ENCODE measurements at regions of chr12 and their contacts with region 1.

Region 1: DNA sequence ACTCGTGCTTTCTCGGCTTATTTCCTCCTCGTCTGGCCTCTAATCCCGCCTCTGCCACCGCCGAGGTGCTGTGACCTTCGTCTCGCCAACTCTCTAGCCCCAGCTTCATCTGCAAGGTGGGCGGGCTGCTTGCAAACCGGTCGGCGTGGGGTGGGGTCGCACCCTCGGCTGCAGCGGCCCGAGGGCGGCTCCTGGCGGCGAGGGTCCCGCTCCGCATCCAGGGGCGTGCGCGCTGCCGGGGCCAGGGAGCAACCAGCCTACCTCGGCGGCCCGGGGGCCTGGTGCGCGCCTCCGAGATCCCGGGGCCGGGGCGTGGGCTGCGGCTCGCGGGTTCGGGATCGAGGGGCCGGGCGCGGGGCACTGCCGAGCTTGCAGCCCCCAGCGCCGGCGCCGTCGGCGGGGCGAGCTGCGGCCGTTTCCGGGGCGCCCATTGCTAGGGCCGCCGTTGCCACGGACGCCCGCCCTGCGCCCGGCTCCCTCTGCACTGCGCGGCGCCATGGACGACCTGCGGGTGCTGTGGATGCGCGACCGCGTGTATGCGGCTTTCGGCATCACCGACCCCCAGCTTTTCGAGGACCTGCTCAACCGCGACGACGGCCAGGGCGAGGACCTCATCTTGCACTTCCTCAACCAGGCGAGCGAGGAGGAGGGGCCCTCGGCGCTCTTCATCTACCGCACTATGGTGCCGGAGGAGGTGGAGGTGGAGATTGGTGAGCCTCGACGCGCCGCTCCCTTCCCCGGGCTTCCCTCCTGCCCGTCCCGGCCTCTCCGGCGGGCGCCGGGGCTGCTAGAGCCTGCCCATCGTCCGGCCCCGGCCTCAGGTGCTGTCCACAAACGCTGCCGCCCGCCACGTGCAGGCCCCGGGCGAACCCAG is at the start of gene DNAH10:
- DNase-seq: peak; percentile 87 to 90
- H3K4me3 ChIP-seq: peak within 1 kb of the TSS; percentile 84
- H3K4me3 Mint-ChIP-seq: peak within 1 kb of the TSS; percentile 68
- H3K27ac Mint-ChIP-seq: no peak within 1 kb of the TSS
- H3K4me1 ChIP-seq: peaks cover 6% of the 10 kb centered on the region
- H3K4me1 Mint-ChIP-seq: no peaks in the 10 kb centered on the region
- H3K27me3 ChIP-seq: no peaks in the 10 kb centered on the region
- H3K27me3 Mint-ChIP-seq: no peaks in the 10 kb centered on the region
- CTCF ChIP-seq: peak; percentile 61 to 77
- total RNA-seq, gene DNAH10: 0.16 and 0.45 TPM in 2 replicates

Region 2: GRCh38 chr12:123713398-123713797 is 48.7 kb before region 1 on chr12:
- CTCF ChIA-PET with region 1: interaction called, 5 read pairs
- POLR2A ChIA-PET with region 1: no interaction called
- intact Hi-C with region 1: loop called (anchors 2 kb)
- DNase-seq: peak in 1 of 2 experiments; percentile 9
- H3K4me3 ChIP-seq: peak overlapping the region; percentile 99
- H3K4me3 Mint-ChIP-seq: peak overlapping the region; percentile 81
- H3K27ac Mint-ChIP-seq: peak overlapping the region; percentile 7
- H3K4me1 ChIP-seq: peaks cover 9% of the 10 kb centered on the region
- H3K4me1 Mint-ChIP-seq: peaks cover 9% of the 10 kb centered on the region
- H3K27me3 ChIP-seq: no peaks in the 10 kb centered on the region
- H3K27me3 Mint-ChIP-seq: no peaks in the 10 kb centered on the region
- CTCF ChIP-seq: no peak

Region 3: GRCh38 chr12:124264089-124264795 is 502.2 kb after region 1 on chr12:
- CTCF ChIA-PET with region 1: no interaction called
- POLR2A ChIA-PET with region 1: no interaction called
- intact Hi-C with region 1: no loop called
- DNase-seq: no peak
- H3K4me3 ChIP-seq: no peak overlapping the region
- H3K4me3 Mint-ChIP-seq: no peak overlapping the region
- H3K27ac Mint-ChIP-seq: peak overlapping the region; percentile 81
- H3K4me1 ChIP-seq: peaks cover 2% of the 10 kb centered on the region; the same call in 1 of the 2 replicates
- H3K4me1 Mint-ChIP-seq: peaks cover 23% of the 10 kb centered on the region
- H3K27me3 ChIP-seq: no peaks in the 10 kb centered on the region
- H3K27me3 Mint-ChIP-seq: no peaks in the 10 kb centered on the region
- CTCF ChIP-seq: no peak